PC-3 (cell line): ENCODE measurements at regions of chr17 and their contacts with region 1.

Region 1: DNA sequence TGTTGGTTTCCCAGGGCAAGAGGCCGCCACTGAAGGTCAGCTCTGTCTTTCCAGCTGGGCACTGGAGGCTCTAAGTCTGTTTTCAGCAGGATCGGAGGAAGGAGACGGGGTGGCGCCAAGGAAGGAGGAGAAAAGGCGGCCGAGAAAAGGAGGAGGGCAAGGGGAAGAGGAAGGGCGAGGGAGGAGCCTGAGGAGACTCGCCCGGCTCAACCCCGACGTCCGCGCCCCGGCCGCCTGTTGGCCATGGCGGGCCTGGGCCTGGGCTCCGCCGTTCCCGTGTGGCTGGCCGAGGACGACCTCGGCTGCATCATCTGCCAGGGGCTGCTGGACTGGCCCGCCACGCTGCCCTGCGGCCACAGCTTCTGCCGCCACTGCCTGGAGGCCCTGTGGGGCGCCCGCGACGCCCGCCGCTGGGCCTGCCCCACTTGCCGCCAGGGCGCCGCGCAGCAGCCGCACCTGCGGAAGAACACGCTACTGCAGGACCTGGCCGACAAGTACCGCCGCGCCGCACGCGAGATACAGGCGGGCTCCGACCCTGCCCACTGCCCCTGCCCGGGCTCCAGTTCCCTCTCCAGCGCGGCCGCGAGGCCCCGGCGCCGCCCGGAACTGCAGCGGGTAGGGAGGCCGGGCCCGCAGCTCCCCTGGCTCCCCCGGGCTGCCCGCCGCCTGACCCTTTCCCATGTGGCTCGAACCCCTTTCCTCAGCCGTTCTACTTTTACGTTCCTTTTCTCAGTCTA is at the start of gene RNF135:
- DNase-seq: peak; percentile 71
- ATAC-seq: peak; percentile 92
- H3K4me3 ChIP-seq: peak within 1 kb of the TSS; percentile 87
- H3K27ac ChIP-seq: peak within 1 kb of the TSS; percentile 89
- H3K4me1 ChIP-seq: no peaks in the 10 kb centered on the region
- H3K27me3 ChIP-seq: no peaks in the 10 kb centered on the region
- CTCF ChIP-seq: no peak
- total RNA-seq, gene RNF135: 10.4 and 10.7 TPM in 2 replicates

Region 2: DNA sequence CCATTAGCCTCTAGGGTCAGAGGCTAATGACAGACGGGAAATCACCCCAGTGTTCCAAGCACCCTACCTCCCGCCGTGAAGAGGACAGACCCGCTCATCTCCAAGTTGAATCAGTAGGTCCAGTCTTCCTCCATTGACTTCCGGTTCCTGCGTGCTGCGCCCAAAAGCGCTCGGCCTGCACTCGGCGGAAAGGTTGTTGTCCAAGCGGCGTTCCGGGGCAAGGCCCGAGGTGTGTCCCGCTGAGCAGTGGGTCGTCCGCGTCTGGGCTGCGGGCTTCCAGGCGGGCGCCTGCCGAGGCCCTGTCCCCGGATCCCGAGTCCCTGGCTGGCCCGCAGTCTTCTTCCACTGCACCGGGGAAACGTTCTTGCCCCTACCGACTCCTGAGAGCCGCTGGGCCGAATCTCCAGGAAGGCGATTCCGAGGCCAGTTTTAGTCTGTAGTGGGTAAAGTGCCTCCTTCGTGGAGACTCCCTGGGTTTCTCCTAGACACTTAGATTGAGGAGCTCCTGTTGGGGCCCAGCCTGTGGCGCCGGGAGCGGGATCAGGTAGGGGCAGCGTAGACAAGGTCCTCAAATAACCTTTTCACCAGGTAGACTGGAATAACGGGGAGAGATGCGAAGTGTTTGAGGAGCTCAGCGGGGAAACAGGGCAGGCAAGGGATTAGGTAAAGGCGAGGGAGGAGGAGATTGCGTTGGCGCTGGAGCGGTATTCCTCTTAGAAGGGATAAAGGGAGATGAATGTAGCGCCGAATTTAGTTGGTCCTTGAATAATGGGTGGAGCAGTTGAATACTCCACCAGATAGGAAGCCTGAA is 64.7 kb before region 1 on chr17 and contains the start of gene TEFM:
- CTCF ChIA-PET with region 1: no interaction called
- POLR2A ChIA-PET with region 1: no interaction called
- intact Hi-C with region 1: loop called (anchors 5 kb)
- DNase-seq: peak; percentile 79
- ATAC-seq: peak; percentile 91
- H3K4me3 ChIP-seq: peak within 1 kb of the TSS; percentile 97
- H3K27ac ChIP-seq: peak within 1 kb of the TSS; percentile 43
- H3K4me1 ChIP-seq: no peaks in the 10 kb centered on the region
- H3K27me3 ChIP-seq: no peaks in the 10 kb centered on the region
- CTCF ChIP-seq: no peak
- total RNA-seq, gene TEFM: 9.3 and 11.3 TPM in 2 replicates

Region 3: DNA sequence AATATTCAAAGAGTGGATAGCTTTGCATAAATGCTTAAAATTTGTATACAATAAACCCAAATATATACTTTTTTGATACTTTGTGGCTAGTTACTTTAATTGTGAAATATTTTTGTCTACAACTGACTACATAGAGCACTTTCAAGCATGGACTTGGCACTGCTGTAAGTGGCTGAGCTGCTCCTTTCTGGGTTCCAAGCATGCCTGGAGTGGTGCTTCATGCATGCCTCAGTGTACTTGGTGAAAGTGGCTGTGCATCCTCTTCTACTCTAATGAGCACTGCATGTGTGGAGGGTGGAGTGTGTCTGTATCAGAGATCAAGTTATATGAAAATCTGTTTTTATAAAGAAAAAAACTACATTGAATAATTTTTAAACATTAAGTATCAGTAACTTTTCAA is 232.0 kb after region 1 on chr17:
- CTCF ChIA-PET with region 1: no interaction called
- POLR2A ChIA-PET with region 1: interaction called, 13 read pairs
- intact Hi-C with region 1: no loop called
- DNase-seq: no peak
- ATAC-seq: no peak
- H3K4me3 ChIP-seq: no peak overlapping the region
- H3K27ac ChIP-seq: no peak overlapping the region
- H3K4me1 ChIP-seq: peaks cover 7% of the 10 kb centered on the region
- H3K27me3 ChIP-seq: no peaks in the 10 kb centered on the region
- CTCF ChIP-seq: no peak